PC-9 (cell line): ENCODE measurements at regions of chr9 and their contacts with region 1.

Region 1: GRCh38 chr9:75148561-75148960 is 60.2 kb downstream of the OSTF1 start:
- DNase-seq: no peak
- H3K4me3 ChIP-seq: no peak overlapping the region
- H3K27ac ChIP-seq: no peak overlapping the region
- H3K4me1 ChIP-seq: no peaks in the 10 kb centered on the region
- H3K27me3 ChIP-seq: no peaks in the 10 kb centered on the region
- CTCF ChIP-seq: no peak

Region 2: GRCh38 chr9:73237140-73237539 is 1911.4 kb before region 1 on chr9:
- CTCF ChIA-PET with region 1: no interaction called
- POLR2A ChIA-PET with region 1: interaction called, 17 read pairs
- intact Hi-C with region 1: no loop called
- DNase-seq: no peak
- H3K4me3 ChIP-seq: no peak overlapping the region
- H3K27ac ChIP-seq: no peak overlapping the region
- H3K4me1 ChIP-seq: no peaks in the 10 kb centered on the region
- H3K27me3 ChIP-seq: no peaks in the 10 kb centered on the region
- CTCF ChIP-seq: no peak

Region 3: DNA sequence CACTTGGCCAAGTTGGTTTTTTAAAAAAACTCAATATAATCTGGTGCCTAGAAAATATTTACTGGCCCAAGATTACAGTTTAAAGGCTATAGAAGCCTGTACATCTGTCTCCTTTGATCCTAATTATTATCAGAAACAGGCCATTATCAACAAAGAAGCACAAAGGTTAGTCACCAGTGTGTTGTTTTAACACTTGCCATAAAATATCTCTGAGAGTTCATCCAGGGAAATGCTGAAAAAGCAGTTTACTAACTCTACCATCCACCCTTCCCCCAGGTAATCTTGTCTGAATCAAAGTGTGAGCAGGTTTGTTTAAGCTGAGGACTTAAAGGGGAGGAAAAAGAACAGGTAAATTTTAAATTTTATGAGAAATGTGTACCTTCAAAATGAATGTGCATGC is 247.6 kb before region 1 on chr9:
- CTCF ChIA-PET with region 1: no interaction called
- POLR2A ChIA-PET with region 1: no interaction called
- intact Hi-C with region 1: no loop called
- DNase-seq: no peak
- H3K4me3 ChIP-seq: no peak overlapping the region
- H3K27ac ChIP-seq: no peak overlapping the region
- H3K4me1 ChIP-seq: no peaks in the 10 kb centered on the region
- H3K27me3 ChIP-seq: no peaks in the 10 kb centered on the region
- CTCF ChIP-seq: no peak